OCI-LY7 (cell line): ENCODE measurements at regions of chr22 and their contacts with region 1.

Region 1: GRCh38 chr22:39117585-39118191 is 20.6 kb downstream of the APOBEC3H start:
- DNase-seq: peak; percentile 84
- H3K4me3 ChIP-seq: peak overlapping the region; percentile 43
- H3K27ac ChIP-seq: peak overlapping the region; percentile 46
- H3K4me1 ChIP-seq: peaks cover 50% of the 10 kb centered on the region
- CTCF ChIP-seq: peak; percentile 90

Region 2: DNA sequence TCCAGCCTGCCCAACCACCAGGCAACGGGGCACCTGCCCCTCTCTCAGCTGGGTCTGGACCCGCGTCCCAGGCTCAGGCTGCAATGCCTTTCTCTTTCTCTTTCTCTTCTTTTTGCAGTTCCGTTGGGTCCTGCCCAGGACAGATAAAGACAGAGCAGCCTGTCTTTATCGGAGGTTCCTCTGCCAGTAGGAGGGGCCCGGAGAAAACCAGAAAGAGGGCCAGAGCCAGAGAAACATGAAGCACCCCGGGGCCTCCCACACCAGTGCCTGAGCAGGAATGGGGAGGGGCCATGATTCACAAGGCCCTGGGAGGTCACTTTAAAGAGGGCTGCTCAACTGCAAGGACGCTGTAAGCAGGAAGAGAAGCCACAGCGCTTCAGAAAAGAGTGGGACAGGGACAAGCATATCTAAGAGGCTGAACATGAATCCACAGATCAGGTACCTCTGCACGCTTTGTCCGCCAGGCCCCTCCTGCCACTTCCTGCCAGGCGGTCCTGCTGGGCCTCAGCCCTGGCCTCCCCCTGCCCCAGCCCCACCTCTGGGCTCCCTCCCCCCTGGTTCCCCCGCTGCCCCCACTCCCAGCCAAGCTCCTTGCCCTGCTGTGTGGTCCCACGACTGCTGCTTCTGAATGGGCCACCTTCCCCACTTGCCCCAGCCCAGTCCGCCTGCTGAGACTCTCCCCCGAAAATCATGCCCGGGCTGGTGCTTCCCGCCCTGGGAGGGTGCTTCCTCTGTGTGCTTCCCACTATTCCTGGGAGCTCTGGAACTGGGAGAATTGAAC is 103.6 kb before region 1 on chr22 and contains the start of gene APOBEC3C:
- CTCF ChIA-PET with region 1: no interaction called
- POLR2A ChIA-PET with region 1: no interaction called
- intact Hi-C with region 1: loop called (anchors 2 kb)
- DNase-seq: peak; percentile 70
- H3K4me3 ChIP-seq: peak within 1 kb of the TSS; percentile 61
- H3K27ac ChIP-seq: peak within 1 kb of the TSS; percentile 56
- H3K4me1 ChIP-seq: peaks cover 34% of the 10 kb centered on the region
- CTCF ChIP-seq: no peak
- total RNA-seq, gene APOBEC3C: 4.1 and 4.3 TPM in 2 replicates

Region 3: DNA sequence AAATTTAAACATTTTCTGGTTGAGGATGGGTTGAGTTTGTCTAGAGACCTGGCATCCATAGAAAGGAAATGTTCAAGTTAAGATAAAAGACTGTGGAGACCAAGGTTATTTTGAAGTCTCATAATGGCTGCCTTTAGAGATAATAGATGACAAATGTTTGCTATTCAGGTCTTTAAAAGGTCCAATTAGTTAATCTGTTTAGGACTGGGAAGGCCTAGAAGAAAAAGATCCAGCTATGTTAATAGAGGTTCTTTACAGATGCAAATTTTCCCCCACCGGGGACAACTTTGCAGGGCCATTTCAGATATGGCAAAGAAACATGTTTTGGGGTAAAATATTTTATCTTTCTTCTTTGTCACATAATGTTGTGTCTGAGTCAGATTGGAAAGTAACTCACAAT is 43.7 kb before region 1 on chr22:
- CTCF ChIA-PET with region 1: interaction called, 4 read pairs
- POLR2A ChIA-PET with region 1: interaction called, 4 read pairs
- intact Hi-C with region 1: loop called (anchors 2 kb)
- DNase-seq: no peak
- H3K4me3 ChIP-seq: peak overlapping the region; percentile 5
- H3K27ac ChIP-seq: peak overlapping the region; percentile 89
- H3K4me1 ChIP-seq: peaks cover 85% of the 10 kb centered on the region
- CTCF ChIP-seq: no peak

Region 4: GRCh38 chr22:39152511-39153219 is 35.0 kb after region 1 on chr22 and contains the start of gene CBX7:
- CTCF ChIA-PET with region 1: no interaction called
- POLR2A ChIA-PET with region 1: no interaction called
- intact Hi-C with region 1: no loop called
- DNase-seq: peak; percentile 91
- H3K4me3 ChIP-seq: peak within 1 kb of the TSS; percentile 74
- H3K27ac ChIP-seq: peak within 1 kb of the TSS; percentile 56
- H3K4me1 ChIP-seq: peaks cover 45% of the 10 kb centered on the region
- CTCF ChIP-seq: no peak
- total RNA-seq, gene CBX7: 7.3 and 11.9 TPM in 2 replicates